Activated CD4-positive, alpha-beta memory T cell treated with anti-CD3 and anti-CD28 coated beads, Interleukin-2, amount 10 ng/mL, durations not matched to agents 7 days and 5 days (primary cell): ENCODE measurements at regions of chr1 and their contacts with region 1.

Region 1: DNA sequence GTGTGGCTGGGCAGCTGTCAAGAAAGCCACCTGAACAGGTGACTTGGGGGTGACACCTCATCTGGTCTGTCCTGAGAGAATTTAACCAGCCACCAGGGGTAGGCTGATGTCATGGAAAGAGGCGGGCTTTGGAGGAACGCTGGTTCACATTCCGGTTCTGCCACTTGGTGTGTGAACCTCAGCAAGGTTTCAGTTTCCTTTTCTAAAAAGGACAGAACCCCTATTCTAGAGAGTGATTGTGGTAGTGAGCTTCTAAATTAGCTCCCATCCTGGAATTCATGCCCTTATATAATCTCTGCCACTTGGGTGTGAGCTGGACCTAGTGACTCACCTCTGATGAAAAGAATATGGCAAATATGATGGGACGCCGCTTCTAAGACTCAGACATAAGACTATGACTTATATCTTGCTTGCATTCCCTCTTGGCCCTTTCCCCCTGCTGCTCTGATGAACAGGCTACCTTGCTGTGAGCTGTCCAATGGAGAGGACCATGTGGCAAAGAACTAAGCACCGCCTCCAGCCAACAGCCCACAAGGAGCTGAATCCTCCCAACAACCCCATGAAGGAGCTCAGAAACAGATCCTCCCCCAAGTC is 332.1 kb downstream of the RRAGC start:
- DNase-seq: peak; percentile 83
- H3K4me3 Mint-ChIP-seq: peak overlapping the region; percentile 4
- H3K27ac Mint-ChIP-seq: peak overlapping the region; percentile 50
- H3K4me1 Mint-ChIP-seq: peaks cover 18% of the 10 kb centered on the region
- H3K27me3 Mint-ChIP-seq: peaks cover 19% of the 10 kb centered on the region

Region 2: DNA sequence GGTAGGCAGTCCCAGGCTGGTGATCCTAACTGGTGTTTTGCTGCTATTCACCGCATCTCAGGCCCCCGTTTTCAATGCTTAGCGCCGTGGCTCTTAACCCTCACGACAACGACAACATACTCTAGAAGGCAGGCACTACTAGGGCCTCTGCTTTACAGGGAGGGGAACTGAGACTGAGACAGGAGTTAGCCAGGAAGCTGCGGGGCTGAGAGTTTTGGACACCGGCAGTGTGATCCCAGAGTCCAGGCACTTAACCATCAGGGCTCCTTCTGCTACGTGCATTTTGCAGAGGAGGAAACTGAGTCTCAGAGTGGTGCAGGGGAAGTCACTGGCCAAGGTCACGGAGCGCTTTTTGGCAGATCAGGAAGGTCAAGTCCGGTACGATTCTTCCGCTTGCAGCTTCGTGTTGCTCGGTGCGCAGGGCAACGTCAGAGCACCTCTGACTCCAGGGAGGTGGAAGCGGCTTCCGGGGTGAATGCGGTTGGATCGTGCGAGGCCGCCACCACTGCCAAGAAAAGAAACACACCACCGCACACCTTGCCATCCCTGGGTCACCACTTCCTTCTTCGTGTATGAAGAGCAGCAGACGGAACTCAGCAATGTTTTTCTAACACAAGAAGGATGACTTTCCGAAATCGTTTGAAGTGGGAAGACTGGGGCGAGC is 31.8 kb after region 1 on chr1:
- CTCF ChIA-PET with region 1: interaction called, 4 read pairs
- POLR2A ChIA-PET with region 1: interaction called, 10 read pairs
- DNase-seq: peak; percentile 95
- H3K4me3 Mint-ChIP-seq: peak overlapping the region; percentile 63
- H3K27ac Mint-ChIP-seq: peak overlapping the region; percentile 87
- H3K4me1 Mint-ChIP-seq: peaks cover 82% of the 10 kb centered on the region
- H3K27me3 Mint-ChIP-seq: peaks cover 39% of the 10 kb centered on the region